ENCODE measurements at regions of chr11 and their contacts with region 1.

Region 1: DNA sequence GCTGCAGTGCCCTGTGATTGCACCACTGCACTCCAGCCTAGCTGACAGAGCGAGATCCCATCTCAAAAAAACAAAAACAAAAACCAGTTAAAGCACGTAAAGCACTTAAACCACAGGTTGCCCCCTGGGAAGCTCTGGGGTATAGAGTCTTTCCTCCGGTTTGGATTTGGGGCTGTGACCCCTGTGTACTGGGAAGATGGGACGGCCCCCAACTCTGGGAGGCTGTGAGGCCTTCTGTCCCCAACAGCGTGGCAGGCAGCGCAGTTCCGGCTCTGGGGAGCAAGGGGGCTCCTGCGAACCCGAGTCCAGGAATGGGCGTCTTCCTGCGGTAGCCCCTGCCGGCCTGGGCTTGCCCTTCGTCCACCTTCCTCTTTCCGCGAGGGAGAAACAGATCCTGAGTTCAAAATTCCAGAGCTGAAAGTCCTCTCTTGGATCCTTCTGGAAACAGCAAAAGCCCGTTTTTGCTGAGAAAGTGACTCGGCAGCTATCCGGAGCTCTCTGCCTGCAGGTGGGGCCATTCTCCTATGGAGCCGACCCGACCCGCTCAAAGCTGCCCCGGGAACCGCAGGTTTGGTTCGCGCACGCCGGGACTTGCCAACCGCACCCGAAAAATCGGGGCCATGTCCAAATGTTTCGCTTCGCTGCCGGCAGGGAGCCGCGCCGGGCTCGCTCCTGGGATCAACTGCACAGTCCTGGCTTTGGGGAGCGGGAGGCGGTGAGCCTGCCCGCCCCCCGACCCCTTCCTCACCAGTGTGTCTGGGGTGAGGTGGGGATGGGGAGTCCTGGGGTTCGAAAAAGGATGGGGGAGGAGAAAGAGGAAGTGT is 36.3 kb upstream of the POLA2 start:
- DNase-seq: peak; percentile 54 to 74 (median 72)
- H3K4me3 ChIP-seq: peak overlapping the region; percentile 36 to 80 (median 61)
- H3K27ac ChIP-seq: peak overlapping the region in 1 of 2 experiments; percentile 56
- H3K4me1 ChIP-seq: peaks cover 10 to 52% (median 36%) of the 10 kb centered on the region in 4 experiments
- H3K27me3 ChIP-seq: peaks cover 0 to 3% (median 0%) of the 10 kb centered on the region in 5 experiments

Region 2: GRCh38 chr11:65204646-65205601 is 20.6 kb before region 1 on chr11:
- CTCF ChIA-PET with region 1: interaction called, 25 read pairs
- POLR2A ChIA-PET with region 1: no interaction called
- DNase-seq: peak; percentile 56 to 65 (median 59)
- H3K4me3 ChIP-seq: no peak overlapping the region
- H3K27ac ChIP-seq: no peak overlapping the region
- H3K4me1 ChIP-seq: peaks cover 0 to 10% (median 4%) of the 10 kb centered on the region in 4 experiments
- H3K27me3 ChIP-seq: no peaks in the 10 kb centered on the region

Region 3: DNA sequence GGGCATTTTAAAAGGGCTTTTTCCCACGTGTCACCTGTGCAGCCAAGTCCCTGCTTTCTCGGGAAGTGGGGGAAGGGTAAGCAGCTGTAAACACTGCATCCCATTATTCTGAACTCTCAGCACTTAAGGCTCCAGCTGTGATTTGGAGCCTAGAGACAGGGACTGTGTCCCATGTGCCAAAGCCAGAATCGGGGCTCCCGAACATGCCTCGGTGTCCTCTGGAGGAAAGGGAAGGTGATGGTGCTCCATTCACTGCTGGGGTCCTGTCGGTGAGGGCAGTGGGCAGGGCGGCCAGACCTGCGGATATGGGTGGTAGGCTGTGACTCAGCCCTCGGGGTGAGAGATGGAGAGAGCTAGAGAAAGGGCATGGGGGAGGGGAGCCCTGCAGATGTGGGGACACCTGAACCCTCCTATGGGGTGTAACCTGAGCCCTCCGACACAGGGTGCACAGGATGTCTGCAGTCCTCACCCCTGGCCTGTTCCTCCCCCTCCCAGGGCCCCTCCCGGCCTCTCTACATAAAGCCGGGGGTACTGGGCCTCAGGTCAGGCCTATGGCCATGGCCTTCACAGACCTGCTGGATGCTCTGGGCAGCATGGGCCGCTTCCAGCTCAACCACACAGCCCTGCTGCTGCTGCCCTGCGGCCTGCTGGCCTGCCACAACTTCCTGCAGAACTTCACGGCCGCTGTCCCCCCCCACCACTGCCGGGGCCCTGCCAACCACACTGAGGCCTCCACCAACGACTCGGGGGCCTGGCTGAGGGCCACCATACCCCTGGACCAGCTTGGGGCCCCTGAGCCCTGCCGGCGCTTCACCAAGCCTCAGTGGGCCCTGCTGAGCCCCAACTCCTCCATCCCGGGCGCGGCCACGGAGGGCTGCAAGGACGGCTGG is 11.9 kb before region 1 on chr11:
- CTCF ChIA-PET with region 1: interaction called, 13 read pairs
- POLR2A ChIA-PET with region 1: interaction called, 5 read pairs
- DNase-seq: peak in 2 of 3 donors; percentile 63 to 82
- H3K4me3 ChIP-seq: peak overlapping the region in 5 of 7 experiments; percentile 4 to 54 (median 43)
- H3K27ac ChIP-seq: no peak overlapping the region
- H3K4me1 ChIP-seq: peaks cover 5 to 59% (median 43%) of the 10 kb centered on the region in 4 experiments
- H3K27me3 ChIP-seq: no peaks in the 10 kb centered on the region

Region 4: GRCh38 chr11:65251476-65251875 is 26.0 kb after region 1 on chr11:
- CTCF ChIA-PET with region 1: interaction called, 166 read pairs
- POLR2A ChIA-PET with region 1: interaction called, 6 read pairs
- DNase-seq: no peak
- H3K4me3 ChIP-seq: no peak overlapping the region
- H3K27ac ChIP-seq: no peak overlapping the region
- H3K4me1 ChIP-seq: no peaks in the 10 kb centered on the region
- H3K27me3 ChIP-seq: no peaks in the 10 kb centered on the region

Region 5: GRCh38 chr11:65290448-65291165 is 65.1 kb after region 1 on chr11:
- CTCF ChIA-PET with region 1: no interaction called
- POLR2A ChIA-PET with region 1: no interaction called
- DNase-seq: peak; percentile 65 to 83 (median 82)
- H3K4me3 ChIP-seq: peak overlapping the region in 1 of 7 experiments; percentile 26
- H3K27ac ChIP-seq: peak overlapping the region in 1 of 2 experiments; percentile 43
- H3K4me1 ChIP-seq: peaks cover 11 to 30% (median 21%) of the 10 kb centered on the region in 4 experiments
- H3K27me3 ChIP-seq: no peaks in the 10 kb centered on the region

Region 6: DNA sequence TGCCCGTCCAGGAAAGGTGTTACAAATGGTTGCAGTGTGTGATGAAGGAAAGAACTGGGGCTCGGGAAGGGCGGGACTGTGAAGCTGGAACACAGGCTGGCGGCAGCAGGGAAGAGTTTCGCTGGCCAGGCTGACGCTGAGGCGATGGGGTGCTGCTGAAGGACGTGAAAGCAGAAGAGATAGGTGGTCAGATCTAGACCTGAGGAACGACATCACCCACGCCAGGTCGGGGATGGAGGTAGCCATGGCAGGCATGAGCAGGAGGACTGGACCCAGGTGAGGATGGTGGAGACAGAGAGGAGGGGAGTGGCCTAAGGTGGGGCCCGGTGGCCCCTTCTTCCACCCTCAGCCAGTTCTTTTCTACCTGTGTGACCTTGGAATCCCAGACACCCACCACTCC is 98.3 kb after region 1 on chr11:
- CTCF ChIA-PET with region 1: no interaction called
- POLR2A ChIA-PET with region 1: no interaction called
- DNase-seq: no peak
- H3K4me3 ChIP-seq: no peak overlapping the region
- H3K27ac ChIP-seq: no peak overlapping the region
- H3K4me1 ChIP-seq: no peaks in the 10 kb centered on the region
- H3K27me3 ChIP-seq: no peaks in the 10 kb centered on the region